MCF 10A (cell line): ENCODE measurements at regions of chr5 and their contacts with region 1.

Region 1: GRCh38 chr5:178075840-178076548 is 37.3 kb upstream of the N4BP3 start:
- DNase-seq: peak; percentile 84
- H3K4me3 Mint-ChIP-seq: peak overlapping the region; percentile 10
- H3K27ac Mint-ChIP-seq: no peak overlapping the region
- H3K4me1 Mint-ChIP-seq: peaks cover 36% of the 10 kb centered on the region
- H3K27me3 Mint-ChIP-seq: peaks cover 34% of the 10 kb centered on the region
- CTCF ChIP-seq: peak; percentile 99

Region 2: GRCh38 chr5:178090858-178091540 is 15.0 kb after region 1 on chr5:
- CTCF ChIA-PET with region 1: interaction called, 42 read pairs
- POLR2A ChIA-PET with region 1: interaction called, 7 read pairs
- intact Hi-C with region 1: no loop called
- DNase-seq: no peak
- H3K4me3 Mint-ChIP-seq: no peak overlapping the region
- H3K27ac Mint-ChIP-seq: no peak overlapping the region
- H3K4me1 Mint-ChIP-seq: peaks cover 12% of the 10 kb centered on the region
- H3K27me3 Mint-ChIP-seq: peaks cover 37% of the 10 kb centered on the region
- CTCF ChIP-seq: no peak

Region 3: DNA sequence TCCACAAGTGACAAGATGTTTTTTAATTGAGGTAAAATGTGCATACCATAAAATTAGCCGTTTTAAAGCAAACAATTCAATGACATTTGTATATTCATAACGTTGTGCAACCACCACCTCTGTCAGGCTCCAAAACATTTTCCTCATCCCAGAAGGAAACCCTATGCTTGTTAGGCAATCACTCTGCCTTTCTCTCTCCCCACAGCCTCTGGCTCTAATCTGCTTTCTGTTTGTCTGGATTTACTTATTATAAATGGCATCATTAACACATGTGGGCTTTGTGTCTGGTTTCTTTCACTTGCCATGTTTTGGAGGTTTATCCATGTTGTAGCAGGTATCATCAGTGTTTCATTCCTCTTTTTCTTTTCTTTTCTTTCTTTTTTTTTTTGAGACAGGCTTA is 35.9 kb after region 1 on chr5:
- CTCF ChIA-PET with region 1: interaction called, 55 read pairs
- POLR2A ChIA-PET with region 1: interaction called, 4 read pairs
- intact Hi-C with region 1: loop called (anchors 1 kb)
- DNase-seq: peak; percentile 83
- H3K4me3 Mint-ChIP-seq: no peak overlapping the region
- H3K27ac Mint-ChIP-seq: no peak overlapping the region
- H3K4me1 Mint-ChIP-seq: peaks cover 27% of the 10 kb centered on the region
- H3K27me3 Mint-ChIP-seq: peaks cover 23% of the 10 kb centered on the region
- CTCF ChIP-seq: no peak

Region 4: DNA sequence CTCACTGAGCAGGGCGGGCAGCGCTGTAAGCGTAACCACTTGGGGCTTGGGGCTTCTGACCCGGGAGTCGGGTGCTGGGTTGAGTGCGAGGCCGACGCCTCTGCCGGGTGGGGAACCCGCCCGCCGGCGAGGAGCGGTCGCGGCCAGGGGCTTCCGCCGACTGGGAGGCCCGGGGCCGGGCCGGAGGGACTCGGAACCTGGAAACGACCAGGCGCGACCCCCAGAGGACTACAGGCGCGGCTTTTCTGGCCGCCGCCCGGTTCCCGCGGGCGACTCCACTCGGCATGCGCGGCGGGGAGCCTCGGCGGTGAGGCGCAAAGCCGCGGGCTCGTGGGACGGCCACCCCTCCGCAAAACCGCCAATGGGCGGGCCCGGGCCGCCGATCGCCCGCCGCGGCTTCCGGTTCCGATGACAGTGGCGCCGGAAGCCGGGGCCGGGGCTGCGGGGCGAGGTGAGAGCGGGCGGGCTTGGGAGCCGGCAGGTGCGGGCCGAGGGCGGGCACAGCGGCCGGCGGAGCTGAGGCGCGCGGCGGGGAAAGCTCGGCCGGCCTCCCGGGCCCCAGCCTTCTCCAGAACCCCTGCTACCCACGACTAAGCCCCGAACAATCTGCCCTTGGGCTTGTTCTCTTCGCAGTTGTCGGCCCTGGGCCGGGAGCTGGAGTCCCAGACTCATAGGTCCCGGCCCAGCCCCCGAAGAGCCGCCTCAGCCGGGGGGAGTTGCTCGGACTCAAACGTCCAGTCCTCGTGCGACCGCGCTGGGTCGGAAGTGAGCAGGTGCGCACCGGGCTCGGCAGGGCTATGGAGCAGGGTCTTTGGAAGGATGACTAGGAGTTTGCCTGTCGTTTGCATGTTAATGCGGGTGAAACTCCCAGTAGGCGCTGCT is 54.9 kb after region 1 on chr5 and contains the start of gene RMND5B:
- CTCF ChIA-PET with region 1: interaction called, 97 read pairs
- POLR2A ChIA-PET with region 1: interaction called, 6 read pairs
- intact Hi-C with region 1: loop called (anchors 5 kb)
- DNase-seq: peak; percentile 80
- H3K4me3 Mint-ChIP-seq: peak within 1 kb of the TSS; percentile 74
- H3K27ac Mint-ChIP-seq: peak within 1 kb of the TSS; percentile 81
- H3K4me1 Mint-ChIP-seq: peaks cover 18% of the 10 kb centered on the region
- H3K27me3 Mint-ChIP-seq: no peaks in the 10 kb centered on the region
- CTCF ChIP-seq: no peak
- total RNA-seq, gene RMND5B: 53.0 and 56.5 TPM in 2 replicates

Region 5: GRCh38 chr5:178153573-178154343 is 77.8 kb after region 1 on chr5 and contains the start of gene NHP2:
- CTCF ChIA-PET with region 1: interaction called, 286 read pairs
- POLR2A ChIA-PET with region 1: interaction called, 123 read pairs
- intact Hi-C with region 1: no loop called
- DNase-seq: peak; percentile 100
- H3K4me3 Mint-ChIP-seq: peak within 1 kb of the TSS; percentile 98
- H3K27ac Mint-ChIP-seq: peak within 1 kb of the TSS; percentile 8
- H3K4me1 Mint-ChIP-seq: peaks cover 11% of the 10 kb centered on the region
- H3K27me3 Mint-ChIP-seq: no peaks in the 10 kb centered on the region
- CTCF ChIP-seq: no peak
- total RNA-seq, gene NHP2: 322 and 327 TPM in 2 replicates

Region 6: GRCh38 chr5:178182158-178182876 is 106.3 kb after region 1 on chr5:
- CTCF ChIA-PET with region 1: interaction called, 13 read pairs
- POLR2A ChIA-PET with region 1: interaction called, 3 read pairs
- intact Hi-C with region 1: no loop called
- DNase-seq: no peak
- H3K4me3 Mint-ChIP-seq: no peak overlapping the region
- H3K27ac Mint-ChIP-seq: no peak overlapping the region
- H3K4me1 Mint-ChIP-seq: no peaks in the 10 kb centered on the region
- H3K27me3 Mint-ChIP-seq: no peaks in the 10 kb centered on the region
- CTCF ChIP-seq: no peak

Region 7: GRCh38 chr5:178279725-178280438 is 203.9 kb after region 1 on chr5:
- CTCF ChIA-PET with region 1: no interaction called
- POLR2A ChIA-PET with region 1: no interaction called
- intact Hi-C with region 1: no loop called
- DNase-seq: peak; percentile 87
- H3K4me3 Mint-ChIP-seq: no peak overlapping the region
- H3K27ac Mint-ChIP-seq: no peak overlapping the region
- H3K4me1 Mint-ChIP-seq: peaks cover 30% of the 10 kb centered on the region
- H3K27me3 Mint-ChIP-seq: no peaks in the 10 kb centered on the region
- CTCF ChIP-seq: peak; percentile 99